ENCODE measurements at regions of chr11 and their contacts with region 1.

Region 1: GRCh38 chr11:25981998-25982397 is 349.9 kb upstream of the ANO3 start:
- DNase-seq: no peak

Region 2: DNA sequence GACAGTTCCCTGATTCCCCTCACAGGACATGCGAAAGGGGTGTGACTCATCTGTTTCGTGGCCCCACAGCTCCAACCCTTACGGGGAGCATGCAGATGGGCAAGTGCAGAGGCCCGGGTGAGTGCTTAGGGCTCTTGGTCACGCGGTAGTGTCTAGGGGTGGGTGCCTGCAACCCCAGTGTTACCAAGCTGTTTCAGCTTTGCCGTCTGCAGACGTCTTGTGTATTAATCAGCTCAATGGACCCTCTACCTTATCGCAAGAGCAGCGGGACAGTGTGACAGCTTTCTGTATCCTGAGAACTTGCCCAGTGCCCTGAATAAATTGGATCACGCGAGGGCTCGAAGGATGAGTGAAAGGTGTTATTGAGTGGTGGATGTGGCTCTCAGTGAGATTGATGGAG is 466.4 kb before region 1 on chr11:
- intact Hi-C with region 1: no loop called
- DNase-seq: peak in 1 of 10 donors; percentile 66

Region 3: GRCh38 chr11:26087120-26087935 is 105.3 kb after region 1 on chr11:
- intact Hi-C with region 1: no loop called
- DNase-seq: no peak

Region 4: DNA sequence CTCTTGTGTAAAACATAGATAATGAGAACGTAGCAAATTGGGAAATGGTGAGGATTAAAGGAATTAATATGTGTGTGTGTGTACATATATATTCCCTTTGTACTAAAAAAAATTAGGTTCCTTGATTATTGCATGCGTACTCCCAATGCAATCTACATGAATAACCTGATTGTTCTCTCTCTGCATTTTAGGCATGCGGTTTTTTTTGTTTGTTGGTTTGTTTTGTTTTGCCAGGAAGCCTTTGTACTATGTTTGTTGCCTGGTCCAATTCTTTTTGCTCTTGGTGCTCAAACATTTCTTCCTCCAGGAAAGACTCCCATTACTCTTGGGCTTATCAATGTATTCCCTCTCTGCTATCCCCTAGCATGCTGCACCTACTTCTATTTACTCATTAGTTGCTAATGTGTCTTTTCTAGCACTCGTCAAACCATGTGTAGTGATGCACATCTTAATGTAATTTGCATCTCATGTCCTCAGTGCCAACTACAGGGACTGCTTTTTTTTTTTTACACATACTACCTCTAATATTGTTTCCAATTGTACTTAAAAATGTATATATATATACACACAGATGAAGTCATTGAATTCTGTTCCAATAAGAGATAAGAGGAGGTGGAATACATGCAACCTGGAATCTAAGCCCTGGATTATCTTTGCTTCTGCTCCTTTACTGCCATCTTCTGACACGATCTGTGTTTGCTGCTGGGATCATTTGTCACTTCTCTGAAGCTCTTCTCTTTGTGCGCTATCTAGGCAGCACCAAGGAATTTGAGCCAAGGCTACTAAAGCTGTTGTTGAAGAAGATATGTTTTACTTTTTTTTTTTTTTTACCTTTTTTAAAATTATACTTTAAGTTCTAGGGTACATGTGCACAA is 152.7 kb after region 1 on chr11:
- intact Hi-C with region 1: loop called (anchors 1 kb)
- DNase-seq: peak in 1 of 10 donors; percentile 49

Region 5: DNA sequence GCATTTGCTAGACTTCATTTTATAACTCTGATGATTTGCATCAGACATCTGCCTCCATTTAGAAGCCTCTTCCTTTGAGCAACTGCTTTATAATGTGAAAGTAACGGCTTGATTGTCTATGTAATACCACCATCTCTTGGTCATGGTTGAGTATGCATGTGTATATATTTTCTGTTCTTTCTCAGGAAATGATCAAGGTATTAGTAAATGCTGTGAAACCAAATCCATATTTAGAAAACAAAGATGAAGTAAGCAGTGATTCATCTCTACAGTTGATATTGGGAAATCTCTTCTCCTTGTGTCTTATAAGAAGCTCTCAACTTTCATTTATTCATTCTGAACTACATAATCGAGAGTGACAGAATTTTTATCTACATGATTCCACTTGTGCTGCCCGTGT is 245.3 kb after region 1 on chr11:
- intact Hi-C with region 1: loop called (anchors 5 kb)
- DNase-seq: no peak

Region 6: GRCh38 chr11:26276798-26277424 is 294.9 kb after region 1 on chr11:
- intact Hi-C with region 1: loop called (anchors 2 kb)
- DNase-seq: peak in 8 of 10 donors; percentile 33 to 89 (median 62)

Measured in posterior cingulate gyrus (tissue), 11 donors.